ENCODE measurements at regions of chr1 and their contacts with region 1.

Region 1: GRCh38 chr1:49677706-49678105 is 346.0 kb downstream of the AGBL4 start:
- DNase-seq: no peak
- H3K4me3 ChIP-seq: no peak overlapping the region
- H3K27ac ChIP-seq: no peak overlapping the region
- H3K4me1 ChIP-seq: no peaks in the 10 kb centered on the region
- H3K27me3 ChIP-seq: no peaks in the 10 kb centered on the region
- CTCF ChIP-seq: no peak
- POLR2A ChIP-seq: no peak

Region 2: GRCh38 chr1:49576327-49576901 is 101.3 kb before region 1 on chr1:
- intact Hi-C with region 1: loop called (anchors 5 kb)
- DNase-seq: no peak
- H3K4me3 ChIP-seq: no peak overlapping the region
- H3K27ac ChIP-seq: no peak overlapping the region
- H3K4me1 ChIP-seq: no peaks in the 10 kb centered on the region
- H3K27me3 ChIP-seq: no peaks in the 10 kb centered on the region
- CTCF ChIP-seq: no peak
- POLR2A ChIP-seq: no peak